Dorsolateral prefrontal cortex (tissue), 120 donors: ENCODE measurements at regions of chr11 and their contacts with region 1.

Region 1: GRCh38 chr11:75667831-75668450 is 897 bp downstream of the MAP6 start:
- DNase-seq: peak; percentile 58 to 88 (median 78)
- H3K4me3 ChIP-seq: peak overlapping the region; percentile 61 to 88 (median 76)
- H3K27ac ChIP-seq: peak overlapping the region in 58 of 59 donors; percentile 23 to 94 (median 85)
- H3K27me3 ChIP-seq: no peaks in the 10 kb centered on the region
- CTCF ChIP-seq: peak in 1 of 56 donors; percentile 3

Region 2: GRCh38 chr11:75554258-75555022 is 113.5 kb before region 1 on chr11:
- intact Hi-C with region 1: loop called in 1 of 2 experiments (anchors 5 kb)
- DNase-seq: peak; percentile 32 to 97 (median 96)
- H3K4me3 ChIP-seq: peak overlapping the region in 46 of 59 donors; percentile 1 to 63 (median 36)
- H3K27ac ChIP-seq: peak overlapping the region; percentile 59 to 98 (median 92)
- H3K27me3 ChIP-seq: no peaks in the 10 kb centered on the region
- CTCF ChIP-seq: peak in 11 of 56 donors; percentile 10 to 45 (median 25)

Region 3: DNA sequence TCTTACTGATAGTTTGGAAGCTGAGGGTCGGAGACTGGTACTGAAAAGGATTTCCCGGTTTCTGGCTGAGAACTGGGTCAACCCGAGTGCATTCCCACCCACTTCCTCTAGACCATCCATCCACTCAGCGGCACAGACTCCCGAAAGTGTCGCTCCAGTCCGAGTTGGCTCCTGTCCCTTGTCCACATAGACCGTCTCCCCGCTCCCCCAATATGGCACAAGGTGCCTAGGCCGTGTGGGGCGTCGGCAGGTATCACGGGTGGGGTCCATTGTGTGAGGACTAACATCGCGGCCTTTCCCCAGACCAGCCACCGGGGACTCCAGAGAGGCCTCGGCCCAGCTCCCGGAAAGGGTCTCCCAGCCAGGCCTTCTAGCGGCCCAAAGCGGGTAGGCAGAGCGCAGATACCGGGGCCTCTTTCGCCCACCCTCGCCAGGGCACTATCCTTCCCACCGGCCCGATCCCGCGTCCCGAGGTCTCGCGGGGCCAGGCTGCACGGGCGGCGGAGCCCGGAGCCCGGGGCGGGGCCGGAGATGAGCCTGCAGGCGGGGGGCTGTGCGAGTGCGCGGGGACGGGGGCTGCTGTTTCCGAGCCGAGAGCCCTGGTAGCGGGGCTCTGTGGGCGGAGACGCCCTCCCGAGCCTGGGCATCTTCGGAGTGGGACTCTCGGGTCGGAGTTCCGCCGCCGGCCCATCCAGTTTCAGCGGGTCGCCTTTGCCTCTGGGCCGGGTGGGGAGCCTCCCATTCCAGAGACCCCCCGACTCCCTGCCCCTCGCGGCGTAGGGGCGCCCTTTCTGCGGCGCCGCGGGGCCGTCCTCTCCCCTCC is 84.8 kb before region 1 on chr11:
- intact Hi-C with region 1: loop called (anchors 5 to 10 kb)
- DNase-seq: peak in 8 of 10 donors; percentile 37 to 77 (median 52)
- H3K4me3 ChIP-seq: peak overlapping the region; percentile 66 to 93 (median 82)
- H3K27ac ChIP-seq: peak overlapping the region; percentile 78 to 99 (median 96)
- H3K27me3 ChIP-seq: no peaks in the 10 kb centered on the region
- CTCF ChIP-seq: peak in 33 of 56 donors; percentile 3 to 49 (median 29)

Region 4: GRCh38 chr11:75689863-75690609 is 22.1 kb after region 1 on chr11:
- intact Hi-C with region 1: no loop called
- DNase-seq: no peak
- H3K4me3 ChIP-seq: no peak overlapping the region
- H3K27ac ChIP-seq: no peak overlapping the region
- H3K27me3 ChIP-seq: peaks cover 0 to 4% (median 0%) of the 10 kb centered on the region in 45 donors
- CTCF ChIP-seq: no peak

Region 5: GRCh38 chr11:75797792-75798191 is 129.9 kb after region 1 on chr11:
- intact Hi-C with region 1: no loop called
- DNase-seq: peak in 1 of 10 donors; percentile 26
- H3K4me3 ChIP-seq: no peak overlapping the region
- H3K27ac ChIP-seq: no peak overlapping the region
- H3K27me3 ChIP-seq: no peaks in the 10 kb centered on the region
- CTCF ChIP-seq: no peak